ENCODE measurements at regions of chr12 and their contacts with region 1.

Region 1: DNA sequence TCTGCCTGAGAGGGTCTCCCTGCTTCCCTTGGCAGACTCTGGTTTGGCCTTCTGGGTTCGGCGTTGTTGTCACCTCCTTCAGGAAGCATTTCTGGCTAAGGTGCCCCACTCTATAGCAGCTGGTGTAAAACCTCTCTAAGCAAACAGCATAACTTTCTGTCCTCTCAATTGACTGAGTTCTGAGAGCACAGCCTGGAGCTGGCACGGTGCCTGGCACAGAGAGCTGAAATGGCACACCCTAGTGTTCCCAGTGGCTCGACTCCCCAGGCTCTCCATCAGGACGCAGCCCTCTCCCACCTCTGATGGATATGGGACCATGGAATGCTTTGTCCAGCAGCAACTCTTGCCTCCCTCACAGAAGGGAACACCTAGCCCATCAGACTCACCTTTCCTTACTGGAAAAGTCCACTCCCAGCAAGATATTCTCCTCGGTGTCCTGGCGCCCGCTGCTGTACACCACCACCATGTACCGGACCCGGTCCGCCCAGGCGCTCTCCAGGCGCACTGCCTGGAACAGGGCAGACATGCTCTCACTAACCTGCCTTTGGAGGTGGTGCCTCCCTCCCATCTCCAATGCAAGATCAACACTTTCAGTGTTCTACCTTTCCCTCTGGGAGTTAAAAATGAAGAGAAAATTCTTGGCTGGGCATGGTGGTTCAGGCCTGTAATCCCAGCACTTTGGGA is 40.6 kb downstream of the SSH1 start:
- DNase-seq: no peak
- ATAC-seq: peak; percentile 48

Region 2: GRCh38 chr12:108744021-108744897 is 72.5 kb before region 1 on chr12:
- intact Hi-C with region 1: no loop called
- DNase-seq: no peak
- ATAC-seq: no peak

Region 3: DNA sequence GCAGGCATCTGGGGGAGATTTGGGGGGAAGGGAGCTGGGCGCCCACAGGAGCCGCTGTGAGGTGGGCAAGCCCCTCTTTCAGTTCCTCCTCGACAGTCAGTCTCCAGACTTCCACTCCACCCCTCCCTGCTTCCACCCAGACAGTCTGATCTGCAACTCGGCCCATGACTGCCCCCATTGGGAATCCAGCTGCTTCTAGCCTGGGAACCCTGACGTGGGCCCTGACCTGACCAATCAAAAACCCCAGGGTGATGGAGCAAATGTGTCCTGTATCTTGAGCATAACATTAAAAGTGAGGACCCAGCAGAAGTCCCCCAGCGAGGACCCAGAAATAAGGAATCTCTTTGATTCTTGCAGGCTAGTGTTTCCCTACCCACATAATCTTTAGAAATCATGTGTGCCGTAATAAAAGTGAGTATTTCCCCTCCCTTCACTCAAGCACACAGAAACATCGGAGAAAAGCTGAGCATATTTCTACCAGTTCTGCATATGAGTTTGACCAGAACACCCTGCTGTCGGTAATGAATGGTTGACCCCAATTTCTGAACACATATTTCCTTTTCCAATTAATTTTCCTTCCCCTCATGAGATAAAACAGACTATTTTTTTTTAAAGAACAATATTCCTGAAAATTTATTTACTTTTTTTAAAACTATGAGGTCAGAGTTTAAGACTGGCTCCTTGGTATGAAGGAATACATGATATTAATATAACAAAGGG is 34.2 kb after region 1 on chr12:
- intact Hi-C with region 1: loop called (anchors 5 kb)
- DNase-seq: no peak
- ATAC-seq: peak; percentile 59

Region 4: DNA sequence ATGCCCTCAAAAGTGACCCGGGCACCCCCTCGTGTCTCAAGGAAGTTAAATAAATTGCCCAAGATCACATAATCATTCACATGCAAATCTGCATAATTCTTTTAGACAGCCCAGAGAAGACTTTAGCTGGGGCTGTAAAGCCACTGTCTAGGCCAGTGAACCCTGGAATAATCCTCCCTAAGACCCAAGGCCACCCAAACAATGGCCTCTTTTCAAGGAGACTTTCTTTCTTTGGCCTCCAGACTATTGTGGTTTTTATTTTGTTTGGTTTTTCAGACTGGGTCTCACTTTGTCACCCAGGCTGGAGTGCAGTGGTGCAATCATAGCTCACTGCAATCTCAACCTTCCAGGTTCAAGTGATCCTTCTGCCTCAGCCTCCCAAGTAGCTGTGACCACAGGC is 193.5 kb after region 1 on chr12:
- intact Hi-C with region 1: no loop called
- DNase-seq: no peak
- ATAC-seq: no peak

Measured in Right ventricle myocardium inferior (tissue), 1 donor.